Gastrocnemius medialis (tissue), 4 donors: ENCODE measurements at regions of chr6 and their contacts with region 1.

Region 1: DNA sequence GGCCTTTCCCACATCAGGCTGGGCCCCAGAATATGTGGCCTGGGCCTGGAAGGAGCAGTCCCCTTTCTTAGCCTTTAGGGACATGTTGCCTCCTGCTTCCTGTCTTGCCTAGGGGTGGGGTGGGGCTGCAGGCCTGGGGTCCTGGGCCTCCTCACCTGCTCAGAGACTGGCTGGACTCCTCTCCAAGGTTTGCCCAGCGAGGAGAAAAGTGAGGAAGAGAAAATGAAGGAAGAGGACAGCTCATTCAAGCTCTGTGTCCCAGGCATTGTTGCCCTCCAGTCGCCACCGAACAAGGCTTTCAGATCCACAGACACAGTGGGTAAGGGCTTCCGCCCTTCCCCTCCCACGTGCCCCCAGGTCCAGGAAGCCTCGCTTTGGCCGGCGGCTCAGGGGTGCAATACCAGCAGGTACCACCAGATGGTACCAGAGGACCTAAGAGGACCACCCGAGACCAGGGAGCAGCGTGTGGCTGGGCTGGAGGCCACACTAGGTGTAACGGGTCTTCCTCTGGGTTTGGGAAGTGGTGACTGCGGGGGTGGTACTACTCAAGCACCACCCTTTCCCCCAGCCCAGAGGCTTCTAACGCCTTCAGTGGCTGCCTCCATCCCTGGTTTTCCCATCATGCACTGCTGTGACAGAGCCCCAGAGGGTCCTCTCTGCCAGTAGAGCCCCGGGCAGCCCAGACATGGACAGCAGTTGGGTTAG is 5.5 kb upstream of the BAK1 start:
- DNase-seq: peak; percentile 56 to 80
- ATAC-seq: peak in 1 of 2 donors; percentile 45
- H3K4me3 ChIP-seq: no peak overlapping the region
- H3K27ac ChIP-seq: no peak overlapping the region
- H3K4me1 ChIP-seq: peaks cover 28 to 30% of the 10 kb centered on the region in 2 donors
- H3K27me3 ChIP-seq: no peaks in the 10 kb centered on the region
- CTCF ChIP-seq: peak; percentile 98 to 100 (median 99)
- POLR2A ChIP-seq: no peak

Region 2: DNA sequence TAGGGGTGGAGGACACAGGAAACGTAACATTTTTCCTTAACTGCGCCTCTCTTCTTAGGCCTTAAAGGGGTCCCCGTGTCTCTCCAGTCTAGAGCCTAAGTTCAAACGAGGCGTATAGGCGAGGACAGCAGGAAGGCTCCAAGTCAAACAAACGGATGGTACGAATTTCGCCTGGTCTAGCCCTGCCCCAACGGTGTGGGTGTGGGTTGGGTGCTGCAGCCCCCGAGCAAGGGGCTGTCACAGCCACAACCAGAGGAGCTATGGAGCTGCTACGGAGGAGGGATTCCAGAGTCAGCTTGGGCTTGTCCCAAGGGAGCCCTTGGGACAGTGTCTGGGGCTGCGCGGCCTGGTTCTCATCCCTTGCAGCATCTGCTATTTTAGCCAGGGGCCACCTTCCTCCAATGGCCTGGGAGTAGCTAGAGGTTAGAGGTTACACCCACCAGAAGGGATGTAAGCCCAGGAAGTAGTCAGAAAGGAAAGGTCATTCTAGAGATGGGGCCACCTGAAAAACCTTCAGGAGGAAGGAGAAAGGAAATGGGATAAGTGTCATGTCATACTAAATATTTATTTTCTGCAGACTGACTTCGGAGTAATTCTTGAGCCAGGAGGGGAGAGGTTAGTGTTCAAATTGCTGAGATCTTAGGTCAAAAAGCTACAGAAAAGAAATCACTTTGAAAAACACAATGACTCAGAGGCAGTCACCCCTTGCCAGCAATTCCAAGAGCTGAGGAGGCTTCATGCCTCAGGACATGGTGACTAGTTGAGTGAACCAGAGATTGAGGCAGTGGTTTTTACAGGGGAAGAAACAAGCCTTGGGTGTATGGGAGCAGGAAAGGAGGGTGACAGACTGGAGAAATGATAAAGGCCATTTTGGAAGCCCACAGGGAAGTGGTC is 335.6 kb before region 1 on chr6:
- in situ Hi-C with region 1: no loop called
- intact Hi-C with region 1: no loop called
- DNase-seq: peak in 1 of 2 donors; percentile 18
- ATAC-seq: no peak
- H3K4me3 ChIP-seq: peak overlapping the region; percentile 54 to 83 (median 65)
- H3K27ac ChIP-seq: peak overlapping the region; percentile 84 to 96 (median 88)
- H3K4me1 ChIP-seq: peaks cover 10 to 17% of the 10 kb centered on the region in 2 donors
- H3K27me3 ChIP-seq: no peaks in the 10 kb centered on the region
- CTCF ChIP-seq: no peak
- POLR2A ChIP-seq: no peak

Region 3: GRCh38 chr6:33633462-33634158 is 48.1 kb after region 1 on chr6:
- in situ Hi-C with region 1: loop called in 1 of 4 experiments (anchors 10 kb)
- intact Hi-C with region 1: loop called (anchors 1 kb)
- DNase-seq: peak; percentile 27 to 61
- ATAC-seq: peak; percentile 79 to 87
- H3K4me3 ChIP-seq: peak overlapping the region; percentile 51 to 78 (median 54)
- H3K27ac ChIP-seq: peak overlapping the region; percentile 12 to 59 (median 41)
- H3K4me1 ChIP-seq: peaks cover 13 to 20% of the 10 kb centered on the region in 2 donors
- H3K27me3 ChIP-seq: no peaks in the 10 kb centered on the region
- CTCF ChIP-seq: no peak
- POLR2A ChIP-seq: peak in 1 of 2 donors; percentile 9

Region 4: DNA sequence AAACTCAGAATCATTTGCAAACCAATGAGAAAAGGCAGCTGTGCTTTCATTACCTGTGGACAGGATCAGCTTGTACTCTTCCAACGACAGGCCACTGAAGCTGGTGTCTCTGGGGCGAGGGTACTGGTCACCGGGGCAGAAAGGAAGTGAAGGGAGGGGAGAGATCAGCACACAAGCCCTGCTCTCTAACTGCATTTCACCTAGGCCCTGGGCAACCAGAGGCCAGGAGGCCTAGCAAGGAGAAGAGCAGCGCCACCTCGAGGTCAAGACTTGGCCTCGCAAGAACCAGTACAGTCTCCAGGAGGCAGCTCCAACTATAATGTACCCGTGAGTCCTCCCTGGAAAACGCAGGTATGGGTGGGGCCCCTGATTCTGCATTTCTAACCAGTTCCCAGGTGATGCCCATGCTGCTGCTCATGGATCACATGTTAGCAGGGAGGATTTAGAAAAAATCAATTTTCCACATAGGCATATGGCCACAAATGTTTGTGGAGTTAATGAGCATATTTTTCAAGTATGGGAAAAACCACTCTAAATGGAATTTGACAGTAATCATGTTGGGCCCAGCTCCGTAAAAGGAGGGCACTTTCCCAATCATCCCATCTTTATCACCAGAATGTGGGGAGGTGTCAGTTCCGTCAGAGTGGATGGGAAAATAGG is 115.0 kb after region 1 on chr6:
- in situ Hi-C with region 1: loop called (anchors 5 to 10 kb)
- intact Hi-C with region 1: loop called (anchors 1 kb)
- DNase-seq: peak; percentile 58 to 61
- ATAC-seq: peak; percentile 81
- H3K4me3 ChIP-seq: no peak overlapping the region
- H3K27ac ChIP-seq: peak overlapping the region in 3 of 4 donors; percentile 12 to 54 (median 35)
- H3K4me1 ChIP-seq: peaks cover 21 to 40% of the 10 kb centered on the region in 2 donors
- H3K27me3 ChIP-seq: no peaks in the 10 kb centered on the region
- CTCF ChIP-seq: peak; percentile 23 to 77 (median 69)
- POLR2A ChIP-seq: no peak

Region 5: GRCh38 chr6:33761922-33762629 is 176.5 kb after region 1 on chr6:
- in situ Hi-C with region 1: loop called in 2 of 4 experiments (anchors 10 kb)
- intact Hi-C with region 1: loop called (anchors 1 kb)
- DNase-seq: peak; percentile 84 to 98
- ATAC-seq: peak; percentile 91 to 95
- H3K4me3 ChIP-seq: peak overlapping the region in 3 of 4 donors; percentile 27 to 37 (median 34)
- H3K27ac ChIP-seq: peak overlapping the region; percentile 85 to 93 (median 90)
- H3K4me1 ChIP-seq: peaks cover 24 to 26% of the 10 kb centered on the region in 2 donors
- H3K27me3 ChIP-seq: no peaks in the 10 kb centered on the region
- CTCF ChIP-seq: peak; percentile 73 to 85 (median 85)
- POLR2A ChIP-seq: peak; percentile 31 to 46